ENCODE measurements at regions of chr2 and their contacts with region 1.

Region 1: DNA sequence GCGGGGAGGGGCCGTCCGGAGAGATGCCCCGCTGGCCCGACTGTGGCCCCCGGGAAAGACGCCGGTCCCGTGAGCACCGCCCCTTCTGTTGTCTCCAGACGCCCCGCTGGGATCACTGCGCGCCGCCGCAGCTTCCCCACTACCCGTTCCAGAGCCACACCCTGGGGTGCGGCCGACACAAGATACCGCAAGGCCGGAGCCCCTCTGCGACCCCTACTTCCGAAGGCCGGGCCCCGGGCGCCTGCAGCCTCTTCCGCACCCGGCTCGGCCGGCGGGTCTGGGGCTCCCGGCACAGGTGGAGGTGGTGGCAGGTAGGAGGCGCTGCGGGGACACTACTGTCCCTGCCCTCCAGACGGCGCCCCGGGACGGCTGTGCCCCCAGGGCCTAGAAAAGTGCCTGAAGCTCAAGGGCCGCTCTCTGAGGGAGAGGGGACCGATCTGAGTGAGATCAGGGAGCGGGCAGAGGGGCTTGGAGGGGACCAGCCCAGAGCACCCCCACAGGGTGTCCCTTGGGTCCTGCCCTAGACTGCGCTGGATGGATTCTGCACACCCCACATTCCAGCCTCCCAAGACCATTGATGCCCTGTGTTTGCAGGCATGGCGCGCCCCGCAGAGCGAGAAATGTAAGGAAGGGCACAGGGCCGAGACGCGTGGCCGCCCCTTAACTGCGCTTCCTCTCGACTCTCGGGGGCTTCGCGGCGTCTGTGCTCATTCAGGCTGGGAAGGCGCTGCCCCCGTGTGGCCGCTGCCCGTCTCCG is 80.0 kb downstream of the GFPT1 start:
- DNase-seq: peak; percentile 76 to 92 (median 85)
- H3K4me3 ChIP-seq: peak overlapping the region; percentile 38 to 80 (median 76)
- H3K27ac ChIP-seq: peak overlapping the region in 4 of 5 donors; percentile 7 to 83 (median 74)
- H3K4me1 ChIP-seq: peaks cover 8 to 20% of the 10 kb centered on the region in 2 donors
- H3K27me3 ChIP-seq: no peaks in the 10 kb centered on the region
- CTCF ChIP-seq: peak; percentile 68 to 96 (median 88)
- POLR2A ChIP-seq: no peak

Region 2: GRCh38 chr2:68943581-68944568 is 363.1 kb before region 1 on chr2:
- intact Hi-C with region 1: loop called in 1 of 2 experiments (anchors 10 kb)
- DNase-seq: peak; percentile 56 to 83 (median 66)
- H3K4me3 ChIP-seq: no peak overlapping the region
- H3K27ac ChIP-seq: no peak overlapping the region
- H3K4me1 ChIP-seq: no peaks in the 10 kb centered on the region
- H3K27me3 ChIP-seq: no peaks in the 10 kb centered on the region
- CTCF ChIP-seq: peak; percentile 77 to 90 (median 84)
- POLR2A ChIP-seq: no peak

Region 3: DNA sequence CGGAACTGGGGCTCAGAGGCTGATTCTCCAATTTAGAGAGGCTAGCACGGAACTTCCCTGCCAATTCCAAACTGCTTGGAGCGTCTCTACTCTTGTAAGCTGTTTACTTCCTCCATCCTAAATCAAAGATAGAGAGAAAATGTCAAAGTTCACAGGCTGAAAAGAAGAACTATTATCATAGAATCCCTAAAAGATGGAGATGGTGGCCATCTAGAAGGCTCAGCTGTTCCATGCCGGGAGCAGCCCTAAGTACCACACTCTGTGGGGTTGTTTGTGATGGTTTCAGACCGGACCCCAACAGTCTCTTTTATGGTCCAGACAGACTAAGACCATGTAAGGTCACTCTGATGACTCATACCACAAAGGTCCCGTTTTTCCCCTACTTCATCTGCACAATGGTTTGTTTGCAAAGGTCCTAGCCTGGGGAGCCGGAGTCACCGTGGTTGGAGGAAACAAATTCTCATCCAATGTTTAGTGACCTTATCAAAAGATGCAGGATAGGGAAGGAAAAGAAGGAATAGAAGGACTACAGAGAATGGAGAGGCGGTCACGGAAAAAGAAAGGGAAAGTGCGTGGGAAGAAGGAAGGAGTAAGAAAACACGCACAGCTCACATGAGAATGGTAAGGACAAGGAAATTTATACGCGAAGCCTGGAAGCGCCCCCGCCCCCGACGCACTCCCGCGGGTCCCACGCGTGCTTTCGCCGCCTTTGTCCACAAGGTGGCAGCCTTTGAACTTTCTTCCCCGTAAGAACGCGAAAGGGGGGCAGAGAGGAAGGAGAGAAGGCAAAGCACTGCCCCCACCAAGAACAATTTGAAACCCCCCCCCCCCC is 294.5 kb before region 1 on chr2:
- intact Hi-C with region 1: loop called in 1 of 2 experiments (anchors 5 kb)
- DNase-seq: peak; percentile 67 to 86 (median 75)
- H3K4me3 ChIP-seq: peak overlapping the region in 3 of 4 donors; percentile 69 to 84 (median 71)
- H3K27ac ChIP-seq: peak overlapping the region in 2 of 5 donors; percentile 85 to 87
- H3K4me1 ChIP-seq: peaks cover 0 to 40% of the 10 kb centered on the region in 2 donors
- H3K27me3 ChIP-seq: no peaks in the 10 kb centered on the region
- CTCF ChIP-seq: peak; percentile 70 to 88 (median 78)
- POLR2A ChIP-seq: no peak

Region 4: DNA sequence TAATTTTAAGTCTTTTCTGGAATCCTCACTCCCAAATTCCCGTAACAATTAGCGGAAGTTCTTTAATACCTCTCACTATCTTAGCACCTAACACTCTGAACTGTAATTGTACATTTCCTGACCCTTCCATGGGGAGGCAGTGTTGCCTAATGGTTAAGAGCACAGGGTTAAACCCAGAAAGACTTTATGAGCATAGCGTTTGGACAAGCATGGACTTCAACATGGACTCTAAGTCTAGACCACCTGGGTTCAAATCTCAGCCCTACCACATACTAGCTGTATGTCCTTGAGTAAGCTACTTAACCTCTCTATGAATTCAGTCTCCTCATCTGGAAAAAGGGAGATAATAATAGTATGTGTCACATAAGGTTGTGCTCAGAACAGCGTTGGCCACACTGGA is 281.0 kb before region 1 on chr2:
- intact Hi-C with region 1: loop called in 1 of 2 experiments (anchors 5 kb)
- DNase-seq: peak in 5 of 7 donors; percentile 20 to 61 (median 39)
- H3K4me3 ChIP-seq: no peak overlapping the region
- H3K27ac ChIP-seq: no peak overlapping the region
- H3K4me1 ChIP-seq: peaks cover under 1 to 12% of the 10 kb centered on the region in 2 donors
- H3K27me3 ChIP-seq: no peaks in the 10 kb centered on the region
- CTCF ChIP-seq: peak; percentile 14 to 73 (median 57)
- POLR2A ChIP-seq: no peak

Region 5: DNA sequence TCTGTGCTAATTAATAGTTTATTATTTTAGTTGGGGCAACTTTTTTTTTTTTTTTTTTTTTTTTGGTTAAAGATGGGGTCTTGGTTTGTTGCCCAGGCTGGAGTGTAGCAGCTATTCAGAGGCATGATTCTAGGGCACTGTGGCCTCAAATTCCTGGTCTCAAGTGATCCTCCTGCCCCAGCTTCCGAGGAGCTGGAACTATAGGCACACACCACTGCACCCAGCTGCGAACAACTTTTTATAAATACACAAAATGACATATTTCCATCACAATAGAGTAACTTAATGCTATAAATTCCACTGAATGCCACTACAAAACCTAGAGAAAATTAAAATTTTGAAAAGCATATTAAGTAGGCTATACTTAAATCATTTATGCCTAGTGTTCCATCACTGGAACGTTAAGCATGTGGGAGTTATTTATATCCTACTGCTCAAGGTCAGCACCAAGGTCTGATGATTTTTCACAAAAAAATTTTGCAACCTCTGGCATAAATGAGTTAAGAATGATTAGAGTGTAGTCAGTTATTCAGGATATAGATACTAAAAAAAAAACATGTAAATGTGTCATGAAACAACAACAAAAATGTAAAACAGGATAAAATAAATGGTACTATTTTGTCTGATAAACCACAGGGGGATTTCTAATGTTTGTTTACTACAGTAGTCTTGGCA is 33.2 kb after region 1 on chr2:
- intact Hi-C with region 1: no loop called
- DNase-seq: peak in 1 of 7 donors; percentile 10
- H3K4me3 ChIP-seq: no peak overlapping the region
- H3K27ac ChIP-seq: no peak overlapping the region
- H3K4me1 ChIP-seq: peaks cover 0 to 14% of the 10 kb centered on the region in 2 donors
- H3K27me3 ChIP-seq: no peaks in the 10 kb centered on the region
- CTCF ChIP-seq: no peak
- POLR2A ChIP-seq: no peak

Measured in adrenal gland (tissue), 19 donors.